IMR-90 (cell line): ENCODE measurements at regions of chr4 and their contacts with region 1.

Region 1: DNA sequence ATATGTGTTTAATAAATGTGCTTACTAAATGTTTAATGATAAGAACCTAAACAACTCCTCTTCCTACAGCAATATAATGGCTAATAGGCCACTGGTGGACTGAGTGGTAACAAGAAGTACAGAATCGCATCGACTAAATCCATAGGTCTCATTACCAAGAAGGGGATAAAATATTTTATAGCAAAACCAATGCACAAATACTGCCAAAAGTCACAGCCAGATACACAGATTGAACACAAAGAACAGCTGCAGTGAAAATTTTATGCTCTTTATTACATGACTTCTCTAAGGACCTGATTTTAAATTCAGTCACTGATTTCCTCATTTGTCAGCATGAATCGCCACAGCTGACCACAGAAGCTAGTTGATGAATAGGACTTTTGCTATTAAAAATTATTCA is 285.4 kb downstream of the DHX15 start:
- DNase-seq: no peak
- ATAC-seq: no peak
- H3K4me3 ChIP-seq: no peak overlapping the region
- H3K27ac ChIP-seq: no peak overlapping the region
- H3K4me1 ChIP-seq: no peaks in the 10 kb centered on the region
- H3K27me3 ChIP-seq: peaks cover 2% of the 10 kb centered on the region
- CTCF ChIP-seq: no peak
- POLR2A ChIP-seq: no peak
- RAD21 ChIP-seq: no peak

Region 2: DNA sequence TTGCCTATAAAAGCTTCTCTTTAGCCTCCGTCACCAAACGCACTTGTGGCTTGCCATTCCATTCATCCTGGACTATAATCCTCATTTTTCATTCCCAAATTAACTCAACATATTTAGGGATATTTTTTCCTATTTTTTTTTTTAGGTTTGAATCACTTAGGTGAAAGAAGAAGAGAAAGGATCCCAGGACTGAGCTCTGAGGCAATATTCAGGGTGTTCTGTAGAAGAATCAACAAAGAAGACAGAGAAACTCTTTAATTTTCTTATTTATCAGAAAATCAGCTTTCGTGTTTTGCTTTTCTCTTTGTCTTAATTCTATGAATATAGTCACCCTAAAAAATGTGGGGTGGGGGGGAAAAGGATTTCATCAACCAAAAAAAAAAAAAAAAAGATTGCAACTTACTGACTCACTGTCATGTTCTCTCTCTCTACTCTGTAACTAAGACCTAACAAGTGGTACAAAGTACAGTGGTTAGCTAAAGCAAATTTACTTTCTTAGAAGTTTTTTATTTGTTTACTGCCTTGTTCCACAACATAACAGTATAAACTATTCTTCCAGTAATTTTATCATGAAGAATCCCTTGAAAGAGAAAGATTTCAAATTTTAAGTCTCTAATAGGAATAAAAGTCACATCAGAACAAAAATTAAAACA is 13.5 kb after region 1 on chr4:
- CTCF ChIA-PET with region 1: interaction called, 10 read pairs
- POLR2A ChIA-PET with region 1: no interaction called
- dilution Hi-C with region 1: no loop called
- in situ Hi-C with region 1: no loop called
- intact Hi-C with region 1: no loop called
- DNase-seq: no peak
- ATAC-seq: no peak
- H3K4me3 ChIP-seq: no peak overlapping the region
- H3K27ac ChIP-seq: no peak overlapping the region
- H3K4me1 ChIP-seq: no peaks in the 10 kb centered on the region
- H3K27me3 ChIP-seq: no peaks in the 10 kb centered on the region
- CTCF ChIP-seq: no peak
- POLR2A ChIP-seq: no peak
- RAD21 ChIP-seq: no peak